Lower leg skin (tissue), 4 donors: ENCODE measurements at regions of chr11 and their contacts with region 1.

Region 1: DNA sequence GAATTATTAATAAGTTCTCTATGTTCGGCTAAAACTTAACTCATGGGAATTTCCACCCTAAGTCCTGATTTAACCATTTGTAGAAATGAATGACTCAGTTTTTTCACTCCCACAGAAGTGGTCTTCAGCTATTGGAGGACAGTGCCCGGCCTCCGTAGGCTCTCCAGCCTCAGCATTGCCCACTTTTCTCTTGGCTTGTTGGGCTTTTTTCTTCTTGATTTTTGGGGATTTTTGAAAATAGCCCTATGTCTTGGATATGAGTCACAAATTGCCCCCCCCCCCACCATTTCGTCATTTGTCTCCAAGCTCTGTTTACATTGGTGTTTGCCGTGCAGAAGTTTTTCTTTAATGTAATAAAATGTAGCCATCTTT is 66.7 kb downstream of the PACS1 start:
- DNase-seq: no peak
- H3K4me3 ChIP-seq: no peak overlapping the region
- CTCF ChIP-seq: no peak
- POLR2A ChIP-seq: no peak

Region 2: GRCh38 chr11:66069715-66070603 is 66.8 kb before region 1 on chr11 and contains the start of gene PACS1:
- intact Hi-C with region 1: loop called (anchors 10 kb)
- DNase-seq: peak; percentile 47 to 93
- H3K4me3 ChIP-seq: peak within 1 kb of the TSS; percentile 88
- CTCF ChIP-seq: no peak
- POLR2A ChIP-seq: no peak
- total RNA-seq, gene PACS1: 26.7 to 41.1 (median 32.4) TPM